Breast epithelium (tissue), 4 donors: ENCODE measurements at regions of chr7 and their contacts with region 1.

Region 1: DNA sequence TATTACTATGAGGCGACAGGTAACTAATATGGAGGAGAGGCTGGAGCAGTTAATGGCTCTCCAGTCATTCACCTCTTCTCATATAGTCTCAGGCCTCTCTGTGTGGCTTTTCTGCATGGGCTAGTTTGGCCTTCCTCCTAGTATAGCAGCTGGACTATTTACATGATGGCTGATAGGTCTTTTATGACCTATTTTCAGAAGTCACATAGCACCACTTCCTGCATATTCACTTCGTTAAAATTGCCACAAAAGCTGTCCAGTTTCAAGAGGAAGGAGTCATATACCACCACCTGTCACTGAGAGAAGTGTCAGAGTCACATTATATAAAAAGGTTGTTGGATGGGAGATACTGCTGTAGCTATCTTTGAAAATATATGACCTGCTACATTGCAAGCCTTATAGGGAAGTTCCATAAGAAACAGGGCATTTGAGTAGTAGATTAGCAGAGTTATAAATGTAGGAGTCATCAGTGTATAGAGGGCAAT is 8.0 kb upstream of the DMTF1 start:
- DNase-seq: no peak
- H3K4me3 ChIP-seq: no peak overlapping the region
- H3K27ac ChIP-seq: no peak overlapping the region
- H3K4me1 ChIP-seq: no peaks in the 10 kb centered on the region
- H3K27me3 ChIP-seq: no peaks in the 10 kb centered on the region
- CTCF ChIP-seq: no peak
- POLR2A ChIP-seq: no peak

Region 2: DNA sequence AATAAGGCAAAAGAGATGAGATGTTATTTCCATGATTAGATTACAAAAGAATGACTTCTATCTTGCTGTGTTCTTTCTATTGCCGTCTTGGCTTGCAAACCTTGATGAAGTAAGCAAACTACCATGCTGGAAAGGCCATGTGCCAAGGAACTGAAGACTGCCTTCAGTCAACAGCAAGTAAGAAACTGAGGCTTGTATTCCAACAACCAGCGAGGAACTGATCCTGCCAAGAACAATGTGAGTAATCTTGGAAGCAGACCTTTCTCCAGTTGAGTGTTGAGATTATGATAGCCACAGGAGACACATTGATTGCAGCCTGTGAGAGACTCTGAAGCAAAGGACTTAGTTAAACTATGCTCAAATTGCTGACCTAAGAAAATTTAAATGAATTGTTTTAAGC is 665.1 kb before region 1 on chr7:
- intact Hi-C with region 1: no loop called
- DNase-seq: no peak
- H3K4me3 ChIP-seq: no peak overlapping the region
- H3K27ac ChIP-seq: no peak overlapping the region
- H3K4me1 ChIP-seq: no peaks in the 10 kb centered on the region
- H3K27me3 ChIP-seq: no peaks in the 10 kb centered on the region
- CTCF ChIP-seq: no peak
- POLR2A ChIP-seq: no peak

Region 3: GRCh38 chr7:86932038-86932512 is 212.1 kb before region 1 on chr7:
- intact Hi-C with region 1: loop called (anchors 5 kb)
- DNase-seq: no peak
- H3K4me3 ChIP-seq: no peak overlapping the region
- H3K27ac ChIP-seq: peak overlapping the region; percentile 23 to 71
- H3K4me1 ChIP-seq: no peaks in the 10 kb centered on the region
- H3K27me3 ChIP-seq: no peaks in the 10 kb centered on the region
- CTCF ChIP-seq: no peak
- POLR2A ChIP-seq: no peak